HepG2 (cell line): ENCODE measurements at regions of chr13 and their contacts with region 1.

Region 1: DNA sequence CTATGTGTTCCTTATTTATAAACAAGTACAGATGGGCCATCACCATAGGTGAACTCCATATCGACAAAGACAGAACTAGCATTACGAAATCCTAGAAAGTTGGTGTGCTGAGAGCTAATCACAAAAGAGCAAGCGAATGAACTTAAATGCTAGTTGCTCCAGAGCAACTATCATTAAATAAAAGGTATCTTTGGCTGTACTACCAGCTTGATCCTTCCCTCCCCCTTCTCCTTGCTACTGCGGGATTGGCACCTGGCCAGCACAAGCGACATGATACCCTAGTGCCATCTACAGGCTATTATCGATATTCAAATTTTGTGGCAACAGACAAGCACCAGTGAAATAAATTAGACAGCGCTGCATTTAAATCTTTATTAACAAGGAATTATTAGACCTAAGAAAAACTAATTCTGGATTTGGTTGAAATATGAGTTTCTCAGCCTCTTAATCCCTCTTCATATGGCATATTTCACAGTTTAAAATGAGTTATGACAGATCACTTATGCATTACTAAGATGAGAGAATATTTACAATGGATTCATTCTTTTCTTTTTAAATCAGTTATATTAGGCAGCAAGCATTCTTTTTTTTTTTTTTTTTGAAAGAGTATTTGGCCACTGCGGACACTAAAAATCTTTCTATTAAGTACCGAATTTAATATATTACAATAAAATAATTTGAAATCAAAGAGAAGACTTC is 5.8 kb downstream of the PCDH9 start:
- DNase-seq: peak; percentile 56
- ATAC-seq: peak; percentile 86
- H3K4me3 ChIP-seq: no peak overlapping the region
- H3K27ac ChIP-seq: no peak overlapping the region
- H3K4me1 ChIP-seq: no peaks in the 10 kb centered on the region
- H3K27me3 ChIP-seq: peaks cover 1 to 26% of the 10 kb centered on the region in 2 experiments; a peak in 4 of 5 replicates
- CTCF ChIP-seq: peak; percentile 78
- EP300 ChIP-seq: no peak
- POLR2A ChIP-seq: no peak
- RAD21 ChIP-seq: peak; percentile 29; the same call in 1 of the 2 replicates

Region 2: GRCh38 chr13:66618702-66619101 is 605.6 kb before region 1 on chr13:
- CTCF ChIA-PET with region 1: interaction called, 3 read pairs
- POLR2A ChIA-PET with region 1: no interaction called
- in situ Hi-C with region 1: no loop called
- intact Hi-C with region 1: loop called (anchors 5 kb)
- DNase-seq: peak; percentile 5
- ATAC-seq: peak; percentile 65; the same call in 2 of the 3 replicates
- H3K4me3 ChIP-seq: no peak overlapping the region
- H3K27ac ChIP-seq: no peak overlapping the region
- H3K4me1 ChIP-seq: no peaks in the 10 kb centered on the region
- H3K27me3 ChIP-seq: no peaks in the 10 kb centered on the region
- CTCF ChIP-seq: 0 out of 2 replicates have a peak, but pooled peaks have one; percentile 15
- EP300 ChIP-seq: no peak
- POLR2A ChIP-seq: no peak
- RAD21 ChIP-seq: no peak

Region 3: GRCh38 chr13:67620665-67621064 is 396.4 kb after region 1 on chr13:
- CTCF ChIA-PET with region 1: no interaction called
- POLR2A ChIA-PET with region 1: no interaction called
- in situ Hi-C with region 1: no loop called
- intact Hi-C with region 1: no loop called
- DNase-seq: no peak
- ATAC-seq: no peak
- H3K4me3 ChIP-seq: no peak overlapping the region
- H3K27ac ChIP-seq: no peak overlapping the region
- H3K4me1 ChIP-seq: no peaks in the 10 kb centered on the region
- H3K27me3 ChIP-seq: no peaks in the 10 kb centered on the region; a peak in 1 of 5 replicates
- CTCF ChIP-seq: no peak
- EP300 ChIP-seq: no peak
- POLR2A ChIP-seq: no peak
- RAD21 ChIP-seq: no peak